Transverse colon (tissue), 4 donors: ENCODE measurements at regions of chr2 and their contacts with region 1.

Region 1: GRCh38 chr2:6909431-6910385 is 7.5 kb upstream of the RNF144A start:
- DNase-seq: no peak
- H3K4me3 ChIP-seq: no peak overlapping the region
- H3K27ac ChIP-seq: no peak overlapping the region
- H3K4me1 ChIP-seq: peaks cover 0 to 7% (median 0%) of the 10 kb centered on the region in 4 donors
- H3K27me3 ChIP-seq: no peaks in the 10 kb centered on the region
- CTCF ChIP-seq: no peak
- EP300 ChIP-seq: no peak
- POLR2A ChIP-seq: no peak

Region 2: DNA sequence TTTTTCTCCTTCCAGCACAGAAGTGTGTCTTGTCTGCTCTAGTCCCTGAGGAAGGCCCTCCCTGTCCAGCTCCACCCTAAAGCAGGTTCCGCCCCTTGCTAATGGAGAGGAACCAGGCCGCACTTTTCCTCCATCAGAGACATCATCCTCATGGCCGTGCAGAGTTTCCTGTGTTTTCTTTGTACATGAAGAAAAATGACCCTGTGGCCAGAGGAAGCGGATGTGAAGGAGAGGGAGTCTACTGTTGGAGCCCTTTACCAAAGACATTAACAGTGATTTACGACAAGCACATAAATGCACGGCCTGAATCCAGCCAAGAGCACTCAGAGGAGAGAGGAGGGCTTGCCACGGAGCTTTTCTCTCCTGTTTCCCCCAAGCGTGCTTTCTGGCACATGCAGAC is 117.0 kb after region 1 on chr2:
- in situ Hi-C with region 1: loop called in 2 of 4 experiments (anchors 10 to 25 kb)
- intact Hi-C with region 1: no loop called
- DNase-seq: no peak
- H3K4me3 ChIP-seq: no peak overlapping the region
- H3K27ac ChIP-seq: peak overlapping the region in 2 of 4 donors; percentile 43 to 49
- H3K4me1 ChIP-seq: peaks cover 0 to 4% (median 0%) of the 10 kb centered on the region in 4 donors
- H3K27me3 ChIP-seq: no peaks in the 10 kb centered on the region
- CTCF ChIP-seq: no peak
- EP300 ChIP-seq: no peak
- POLR2A ChIP-seq: no peak

Region 3: GRCh38 chr2:7071154-7071553 is 161.4 kb after region 1 on chr2:
- in situ Hi-C with region 1: no loop called
- intact Hi-C with region 1: no loop called
- DNase-seq: no peak
- H3K4me3 ChIP-seq: no peak overlapping the region
- H3K27ac ChIP-seq: no peak overlapping the region
- H3K4me1 ChIP-seq: no peaks in the 10 kb centered on the region
- H3K27me3 ChIP-seq: no peaks in the 10 kb centered on the region
- CTCF ChIP-seq: no peak
- EP300 ChIP-seq: no peak
- POLR2A ChIP-seq: no peak